ENCODE measurements at regions of chr3 and their contacts with region 1.

Region 1: GRCh38 chr3:184229394-184230080 is at the start of gene VWA5B2:
- DNase-seq: peak; percentile 70 to 87 (median 86)
- ATAC-seq: peak; percentile 94 to 96
- H3K4me3 ChIP-seq: peak within 1 kb of the TSS; percentile 50
- H3K27ac ChIP-seq: no peak within 1 kb of the TSS
- H3K4me1 ChIP-seq: no peaks in the 10 kb centered on the region
- H3K27me3 ChIP-seq: no peaks in the 10 kb centered on the region
- total RNA-seq, gene VWA5B2: not detected

Region 2: DNA sequence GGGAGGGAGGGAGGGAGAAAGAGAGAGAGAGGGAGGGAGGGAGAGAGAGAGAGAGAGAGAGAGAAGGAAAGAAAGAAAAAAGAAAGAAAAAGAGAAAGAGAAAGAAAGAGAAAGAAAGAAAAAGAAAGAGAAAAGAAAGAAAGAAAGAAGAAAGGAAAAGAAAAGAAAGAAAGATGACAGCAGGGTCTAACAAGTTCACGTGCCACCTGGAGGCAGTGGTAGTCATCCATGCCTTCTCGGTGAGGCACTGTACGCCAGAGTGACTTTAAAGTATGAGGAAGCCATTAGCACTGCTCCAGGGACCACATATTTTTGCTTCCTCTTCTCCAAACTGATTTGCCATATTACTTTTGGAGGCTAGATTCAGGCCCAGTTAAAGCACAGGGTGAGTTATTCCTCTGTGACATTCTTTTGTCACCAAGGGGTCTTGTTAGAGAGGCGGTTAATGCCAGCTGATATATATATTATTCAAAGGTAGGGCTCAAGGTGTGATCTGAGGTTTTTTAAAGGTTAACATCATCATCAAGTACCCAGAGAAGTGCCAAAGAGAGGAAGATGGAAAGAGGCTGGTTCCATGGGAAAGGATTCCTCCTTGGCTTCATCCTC is 198.2 kb before region 1 on chr3 and contains the start of gene HTR3D:
- intact Hi-C with region 1: no loop called
- DNase-seq: no peak
- ATAC-seq: no peak
- H3K4me3 ChIP-seq: no peak within 1 kb of the TSS
- H3K27ac ChIP-seq: no peak within 1 kb of the TSS
- H3K4me1 ChIP-seq: no peaks in the 10 kb centered on the region
- H3K27me3 ChIP-seq: no peaks in the 10 kb centered on the region
- total RNA-seq, gene HTR3D: not detected

Region 3: GRCh38 chr3:184145111-184145524 is 84.4 kb before region 1 on chr3:
- intact Hi-C with region 1: loop called in 1 of 4 experiments (anchors 10 kb)
- DNase-seq: peak; percentile 55 to 87 (median 76)
- ATAC-seq: peak; percentile 58 to 60
- H3K4me3 ChIP-seq: no peak overlapping the region
- H3K27ac ChIP-seq: no peak overlapping the region
- H3K4me1 ChIP-seq: no peaks in the 10 kb centered on the region
- H3K27me3 ChIP-seq: no peaks in the 10 kb centered on the region

Region 4: GRCh38 chr3:184289426-184289938 is 59.9 kb after region 1 on chr3:
- intact Hi-C with region 1: loop called in 2 of 4 experiments (anchors 5 to 10 kb)
- DNase-seq: peak in 1 of 3 donors; percentile 39
- ATAC-seq: no peak
- H3K4me3 ChIP-seq: no peak overlapping the region
- H3K27ac ChIP-seq: no peak overlapping the region
- H3K4me1 ChIP-seq: no peaks in the 10 kb centered on the region
- H3K27me3 ChIP-seq: no peaks in the 10 kb centered on the region

Region 5: GRCh38 chr3:184298759-184299496 is 69.4 kb after region 1 on chr3 and contains the start of gene PSMD2:
- intact Hi-C with region 1: loop called in 1 of 4 experiments (anchors 10 kb)
- DNase-seq: peak; percentile 98 to 99 (median 99)
- ATAC-seq: peak; percentile 99
- H3K4me3 ChIP-seq: peak within 1 kb of the TSS; percentile 89
- H3K27ac ChIP-seq: peak within 1 kb of the TSS; percentile 89
- H3K4me1 ChIP-seq: peaks cover 3% of the 10 kb centered on the region
- H3K27me3 ChIP-seq: no peaks in the 10 kb centered on the region
- total RNA-seq, gene PSMD2: 198 to 230 (median 227) TPM

Region 6: GRCh38 chr3:184469423-184469822 is 239.9 kb after region 1 on chr3:
- intact Hi-C with region 1: no loop called
- DNase-seq: peak in 1 of 3 donors; percentile 61
- ATAC-seq: no peak
- H3K4me3 ChIP-seq: no peak overlapping the region
- H3K27ac ChIP-seq: no peak overlapping the region
- H3K4me1 ChIP-seq: peaks cover 7% of the 10 kb centered on the region
- H3K27me3 ChIP-seq: no peaks in the 10 kb centered on the region

Region 7: GRCh38 chr3:184656829-184657681 is 427.5 kb after region 1 on chr3:
- intact Hi-C with region 1: no loop called
- DNase-seq: peak in 1 of 3 donors; percentile 7
- ATAC-seq: peak in 1 of 2 donors; percentile 28
- H3K4me3 ChIP-seq: no peak overlapping the region
- H3K27ac ChIP-seq: no peak overlapping the region
- H3K4me1 ChIP-seq: no peaks in the 10 kb centered on the region
- H3K27me3 ChIP-seq: no peaks in the 10 kb centered on the region